Activated CD8-positive, alpha-beta T cell treated with anti-CD3 and anti-CD28 coated beads, Interleukin-2, amount 10 ng/mL, durations not matched to agents 7 days and 5 days (primary cell): ENCODE measurements at regions of chr19 and their contacts with region 1.

Region 1: DNA sequence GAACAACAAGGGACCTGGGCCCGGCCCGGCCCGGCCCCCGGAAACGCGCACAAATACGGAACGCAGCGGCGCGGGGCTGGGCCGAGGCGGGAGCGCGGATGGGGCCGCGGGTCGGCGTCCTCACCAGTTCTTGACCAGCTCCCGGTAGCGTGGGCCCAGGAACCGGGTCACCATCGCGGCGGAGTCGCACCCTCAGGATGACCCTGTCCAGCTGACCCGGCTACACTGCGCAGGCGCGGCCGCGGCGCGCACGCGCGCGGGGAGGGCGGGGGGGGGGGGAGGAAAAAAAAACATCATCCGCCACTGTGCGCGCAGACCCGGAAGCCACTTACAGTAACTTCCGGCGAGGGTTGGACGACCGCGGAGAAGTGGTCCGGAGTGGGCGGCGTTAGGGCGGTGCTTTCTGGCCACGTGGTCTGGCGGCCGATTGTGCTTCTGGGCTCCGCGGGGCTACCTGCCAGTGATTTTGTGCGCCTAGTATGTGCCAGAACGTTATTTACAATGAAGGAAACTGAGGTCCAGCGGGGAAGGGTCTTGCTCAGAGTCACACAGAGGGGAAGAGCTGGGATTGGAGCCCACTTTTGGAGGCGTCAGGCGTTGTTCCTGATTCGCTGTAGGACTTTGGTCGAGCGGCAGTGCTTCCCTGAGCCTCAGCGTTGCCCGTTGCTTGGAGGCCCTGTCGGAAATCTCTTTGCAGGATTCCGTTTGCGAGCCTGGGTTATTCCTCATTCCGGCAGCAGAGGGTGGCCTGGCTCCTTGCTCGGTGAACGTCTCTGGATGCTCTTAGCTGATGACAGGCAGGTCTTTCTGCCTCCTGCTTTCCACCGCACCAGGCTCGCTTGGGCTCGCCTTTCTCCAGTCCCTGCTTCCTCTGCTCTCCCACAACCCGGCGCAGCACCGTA is at the start of gene UQCR11:
- DNase-seq: peak; percentile 96
- ATAC-seq: peak; percentile 88
- H3K4me3 Mint-ChIP-seq: peak within 1 kb of the TSS; percentile 81
- H3K27ac Mint-ChIP-seq: peak within 1 kb of the TSS; percentile 96
- H3K4me1 Mint-ChIP-seq: peaks cover 56% of the 10 kb centered on the region
- H3K27me3 Mint-ChIP-seq: no peaks in the 10 kb centered on the region
- total RNA-seq, gene UQCR11: 180 to 195 TPM

Region 2: GRCh38 chr19:1577090-1577928 is 28.2 kb before region 1 on chr19:
- CTCF ChIA-PET with region 1: no interaction called
- POLR2A ChIA-PET with region 1: no interaction called
- DNase-seq: no peak
- ATAC-seq: no peak
- H3K4me3 Mint-ChIP-seq: no peak overlapping the region
- H3K27ac Mint-ChIP-seq: no peak overlapping the region
- H3K4me1 Mint-ChIP-seq: no peaks in the 10 kb centered on the region
- H3K27me3 Mint-ChIP-seq: no peaks in the 10 kb centered on the region

Region 3: DNA sequence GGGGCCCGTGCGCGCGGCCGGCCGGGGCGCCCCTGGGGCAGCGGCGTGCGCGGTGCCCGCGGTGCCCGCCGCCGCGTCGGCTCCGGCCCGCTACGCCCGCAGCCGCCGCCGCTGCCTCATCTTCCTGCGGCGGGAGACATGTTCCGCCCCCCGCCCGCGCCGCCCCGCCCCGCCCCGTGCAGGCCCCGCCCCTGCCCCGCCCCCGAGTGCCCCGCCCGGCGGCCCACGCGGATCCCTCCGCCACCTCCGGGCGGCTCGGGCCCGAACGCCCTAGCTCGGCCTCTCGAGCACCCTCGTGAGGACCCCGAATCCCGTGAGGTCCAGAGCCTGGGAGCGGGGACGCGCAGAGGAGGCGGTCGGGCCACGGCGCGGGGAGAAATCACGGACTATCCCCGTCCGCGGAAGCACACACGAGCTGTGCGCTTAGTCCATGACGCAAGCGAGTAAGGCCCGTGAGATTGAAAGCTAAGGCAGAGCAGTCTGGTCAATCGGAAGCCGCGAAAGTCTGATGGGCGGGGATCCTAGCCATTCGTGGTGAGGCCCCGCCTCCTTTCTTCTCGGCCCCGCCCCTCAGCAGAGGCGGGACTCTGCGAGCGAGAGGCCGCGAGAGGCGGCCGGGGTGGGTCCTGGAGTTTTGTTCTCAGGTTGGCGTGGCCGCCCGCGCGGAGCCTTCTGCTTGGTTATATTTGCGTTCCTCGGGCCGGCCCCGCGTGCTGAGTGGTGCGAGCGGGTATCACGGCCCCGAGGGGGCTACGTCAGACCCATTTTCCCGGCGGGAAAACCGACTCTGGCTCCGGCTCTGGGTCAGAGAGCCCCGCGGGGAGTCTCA is 47.2 kb after region 1 on chr19 and contains the start of gene TCF3:
- CTCF ChIA-PET with region 1: interaction called, 18 read pairs
- POLR2A ChIA-PET with region 1: interaction called, 5 read pairs
- DNase-seq: peak; percentile 98
- ATAC-seq: peak; percentile 93
- H3K4me3 Mint-ChIP-seq: peak within 1 kb of the TSS; percentile 88
- H3K27ac Mint-ChIP-seq: peak within 1 kb of the TSS; percentile 93
- H3K4me1 Mint-ChIP-seq: peaks cover 26% of the 10 kb centered on the region
- H3K27me3 Mint-ChIP-seq: no peaks in the 10 kb centered on the region
- total RNA-seq, gene TCF3: 130 to 137 TPM